ENCODE measurements at regions of chr4 and their contacts with region 1.

Region 1: GRCh38 chr4:149218672-149219071 is 597.0 kb downstream of the IQCM start:
- DNase-seq: no peak
- H3K4me3 ChIP-seq: no peak overlapping the region
- H3K27ac ChIP-seq: no peak overlapping the region
- H3K4me1 ChIP-seq: no peaks in the 10 kb centered on the region
- H3K27me3 ChIP-seq: no peaks in the 10 kb centered on the region
- CTCF ChIP-seq: no peak
- POLR2A ChIP-seq: no peak

Region 2: GRCh38 chr4:148730766-148731165 is 487.9 kb before region 1 on chr4:
- intact Hi-C with region 1: loop called (anchors 5 kb)
- DNase-seq: no peak
- H3K4me3 ChIP-seq: no peak overlapping the region
- H3K27ac ChIP-seq: no peak overlapping the region
- H3K4me1 ChIP-seq: no peaks in the 10 kb centered on the region
- H3K27me3 ChIP-seq: no peaks in the 10 kb centered on the region
- CTCF ChIP-seq: no peak
- POLR2A ChIP-seq: no peak

Region 3: GRCh38 chr4:149166876-149167275 is 51.8 kb before region 1 on chr4:
- intact Hi-C with region 1: no loop called
- DNase-seq: no peak
- H3K4me3 ChIP-seq: no peak overlapping the region
- H3K27ac ChIP-seq: no peak overlapping the region
- H3K4me1 ChIP-seq: no peaks in the 10 kb centered on the region
- H3K27me3 ChIP-seq: no peaks in the 10 kb centered on the region
- CTCF ChIP-seq: no peak
- POLR2A ChIP-seq: no peak

Region 4: GRCh38 chr4:149489321-149489720 is 270.6 kb after region 1 on chr4:
- intact Hi-C with region 1: loop called (anchors 5 kb)
- DNase-seq: no peak
- H3K4me3 ChIP-seq: no peak overlapping the region
- H3K27ac ChIP-seq: no peak overlapping the region
- H3K4me1 ChIP-seq: no peaks in the 10 kb centered on the region
- H3K27me3 ChIP-seq: no peaks in the 10 kb centered on the region
- CTCF ChIP-seq: no peak
- POLR2A ChIP-seq: no peak

Measured in breast epithelium (tissue), 4 donors.